Stomach (tissue), 19 donors: ENCODE measurements at regions of chr9 and their contacts with region 1.

Region 1: GRCh38 chr9:130860458-130861316 is 25.6 kb downstream of the ABL1 start:
- DNase-seq: peak; percentile 65 to 86
- H3K4me3 ChIP-seq: no peak overlapping the region
- H3K27ac ChIP-seq: peak overlapping the region; percentile 27 to 85 (median 75)
- H3K4me1 ChIP-seq: peaks cover 8 to 82% (median 41%) of the 10 kb centered on the region in 4 donors
- H3K27me3 ChIP-seq: no peaks in the 10 kb centered on the region
- CTCF ChIP-seq: peak in 3 of 7 experiments; percentile 23 to 29 (median 26)
- EP300 ChIP-seq: no peak
- POLR2A ChIP-seq: no peak

Region 2: DNA sequence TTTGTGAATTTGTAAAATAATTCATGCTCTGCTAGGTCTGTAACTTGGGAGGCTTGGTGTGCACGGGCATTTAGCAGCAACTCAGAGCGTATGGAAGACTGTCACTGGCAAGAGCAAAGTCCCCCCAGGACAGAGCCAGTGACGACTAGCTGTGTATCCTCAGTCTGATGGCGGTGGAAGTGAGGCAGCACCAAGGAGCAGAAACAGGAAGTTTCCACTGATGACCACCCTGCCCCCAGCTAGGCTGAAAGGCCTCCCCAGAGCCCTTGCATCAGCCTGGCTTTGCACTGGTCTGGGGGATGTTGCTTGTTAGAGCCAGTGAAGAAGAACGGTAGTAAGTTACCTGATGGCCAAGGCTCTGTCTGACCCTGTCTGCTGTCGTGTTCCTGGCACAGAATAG is 92.4 kb before region 1 on chr9:
- intact Hi-C with region 1: loop called (anchors 5 kb)
- DNase-seq: peak in 1 of 2 donors; percentile 44
- H3K4me3 ChIP-seq: no peak overlapping the region
- H3K27ac ChIP-seq: no peak overlapping the region
- H3K4me1 ChIP-seq: peaks cover 7 to 46% (median 27%) of the 10 kb centered on the region in 4 donors
- H3K27me3 ChIP-seq: no peaks in the 10 kb centered on the region
- CTCF ChIP-seq: no peak
- EP300 ChIP-seq: no peak
- POLR2A ChIP-seq: no peak